Activated CD8-positive, alpha-beta memory T cell treated with anti-CD3 and anti-CD28 coated beads, Interleukin-2, amount 10 ng/mL, durations not matched to agents 7 days and 5 days (primary cell): ENCODE measurements at regions of chr2 and their contacts with region 1.

Region 1: GRCh38 chr2:73085691-73086360 is 14.3 kb upstream of the SFXN5 start:
- DNase-seq: peak; percentile 89
- ATAC-seq: peak; percentile 96
- H3K4me3 Mint-ChIP-seq: no peak overlapping the region
- H3K27ac Mint-ChIP-seq: no peak overlapping the region
- H3K4me1 Mint-ChIP-seq: no peaks in the 10 kb centered on the region
- H3K27me3 Mint-ChIP-seq: no peaks in the 10 kb centered on the region

Region 2: DNA sequence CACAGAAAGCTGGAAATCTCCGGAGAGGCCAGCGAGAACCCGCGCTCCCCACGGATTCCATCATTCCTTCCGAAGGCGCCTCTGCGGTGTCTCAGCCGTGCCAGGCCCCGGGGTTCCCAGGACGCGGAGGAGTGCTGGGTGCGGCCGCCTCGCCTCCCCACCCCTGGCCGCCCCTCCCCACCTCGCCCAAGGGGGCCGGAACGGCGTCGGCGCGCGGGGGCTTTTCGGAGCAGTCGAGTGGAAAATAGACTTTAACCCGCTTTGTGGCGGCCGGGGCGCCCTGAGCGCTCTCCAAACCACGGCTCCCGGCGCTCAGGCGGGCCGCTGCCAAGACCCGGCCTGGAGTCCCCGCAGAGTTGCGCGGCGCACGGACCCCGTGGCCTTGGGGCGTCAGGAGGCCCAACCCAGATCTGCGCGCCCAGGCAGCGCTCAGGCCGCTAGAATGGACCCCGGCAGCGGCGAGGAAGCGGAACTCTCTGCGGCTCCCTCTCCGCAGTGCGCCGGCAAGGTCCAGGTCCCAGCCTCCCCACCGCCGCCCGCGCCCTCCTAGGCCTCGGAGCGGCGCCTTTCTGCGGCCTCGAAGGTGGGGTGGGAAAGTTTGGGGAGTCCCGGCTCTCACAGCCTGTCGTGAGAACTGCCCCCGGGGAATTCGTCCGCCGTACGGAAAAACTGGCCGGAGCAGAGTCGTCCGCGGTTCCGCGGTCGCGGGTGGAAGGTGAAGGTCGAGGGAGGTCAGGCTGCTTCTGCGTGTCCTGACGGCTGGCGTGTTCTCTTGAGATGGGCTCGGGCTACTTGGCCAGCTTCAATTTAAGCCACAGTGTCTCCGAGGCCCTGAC is 169.7 kb before region 1 on chr2:
- CTCF ChIA-PET with region 1: no interaction called
- DNase-seq: peak; percentile 48
- ATAC-seq: peak; percentile 37
- H3K4me3 Mint-ChIP-seq: no peak overlapping the region
- H3K27ac Mint-ChIP-seq: no peak overlapping the region
- H3K4me1 Mint-ChIP-seq: peaks cover 22% of the 10 kb centered on the region
- H3K27me3 Mint-ChIP-seq: peaks cover 83% of the 10 kb centered on the region

Region 3: DNA sequence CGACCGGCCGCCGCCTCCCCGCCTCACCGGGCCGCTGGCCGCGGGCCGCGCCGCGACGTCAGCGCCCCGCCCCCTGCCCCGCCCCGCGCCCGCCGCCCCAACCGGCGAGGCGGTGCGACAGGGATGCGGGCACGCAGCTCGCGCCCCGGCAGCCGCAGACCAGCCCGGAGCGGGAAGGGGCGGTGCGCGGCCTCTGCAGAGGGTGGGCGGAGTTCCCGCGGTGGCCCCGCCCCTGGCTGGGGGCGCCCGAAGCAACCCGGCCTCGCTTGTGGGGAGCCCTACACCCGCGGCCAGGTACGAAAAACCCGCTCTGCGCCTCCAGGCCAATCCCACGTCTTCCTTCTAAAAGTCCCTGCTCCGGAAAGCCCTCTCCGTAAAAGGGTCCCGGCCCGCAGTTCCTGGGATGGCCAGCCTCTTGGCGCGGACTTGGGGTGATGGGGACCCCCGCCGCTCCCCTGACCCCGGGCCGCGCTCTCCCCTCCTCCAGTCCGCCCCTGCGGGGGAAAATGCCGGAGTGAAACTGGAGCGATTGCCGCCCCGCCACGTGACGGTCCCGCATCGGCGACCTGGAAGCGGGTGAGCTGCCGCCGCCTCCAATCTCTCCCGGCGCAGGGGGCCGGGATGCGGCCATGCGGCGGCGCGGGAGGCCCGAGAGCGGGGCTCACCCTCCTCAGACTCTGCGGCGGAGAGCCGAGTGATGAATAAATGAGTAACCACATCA is 27.2 kb after region 1 on chr2 and contains the start of gene RAB11FIP5:
- CTCF ChIA-PET with region 1: interaction called, 19 read pairs
- DNase-seq: peak; percentile 68
- ATAC-seq: peak; percentile 89
- H3K4me3 Mint-ChIP-seq: peak within 1 kb of the TSS; percentile 66
- H3K27ac Mint-ChIP-seq: no peak within 1 kb of the TSS
- H3K4me1 Mint-ChIP-seq: peaks cover 11% of the 10 kb centered on the region
- H3K27me3 Mint-ChIP-seq: peaks cover 37% of the 10 kb centered on the region
- total RNA-seq, gene RAB11FIP5: 1.1 to 2.9 TPM

Region 4: DNA sequence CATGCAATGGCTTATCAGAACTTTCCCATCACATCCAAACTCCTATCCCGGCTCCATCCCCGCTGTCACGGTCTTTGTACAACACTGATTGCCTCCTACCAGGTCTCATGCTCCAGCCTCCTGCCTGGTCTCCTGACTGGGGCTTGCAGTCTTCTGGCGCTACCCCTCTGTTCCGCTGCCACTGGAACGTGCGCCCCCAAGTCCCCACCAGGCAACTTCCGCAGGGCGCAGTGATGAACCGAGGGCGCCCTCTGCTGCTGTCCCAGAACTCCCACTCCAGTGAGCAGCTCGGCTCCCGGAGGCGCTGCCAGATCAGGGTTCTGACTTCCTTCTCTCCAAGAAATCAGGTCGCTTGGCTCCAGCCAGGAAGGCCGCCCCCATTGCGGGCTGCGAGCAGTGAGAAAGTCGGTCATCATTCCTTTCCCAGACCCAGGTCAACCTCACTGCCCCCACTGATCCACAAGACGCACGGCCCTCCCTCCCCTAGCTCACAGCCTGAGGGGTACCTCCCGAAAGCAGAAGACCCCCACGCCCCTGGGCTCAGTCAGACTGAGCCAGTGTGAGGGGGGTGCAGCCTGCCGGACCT is 70.8 kb after region 1 on chr2:
- CTCF ChIA-PET with region 1: interaction called, 41 read pairs
- DNase-seq: peak; percentile 62
- ATAC-seq: peak; percentile 66
- H3K4me3 Mint-ChIP-seq: no peak overlapping the region
- H3K27ac Mint-ChIP-seq: no peak overlapping the region
- H3K4me1 Mint-ChIP-seq: no peaks in the 10 kb centered on the region
- H3K27me3 Mint-ChIP-seq: peaks cover 53% of the 10 kb centered on the region

Region 5: GRCh38 chr2:73212448-73213176 is 126.8 kb after region 1 on chr2:
- CTCF ChIA-PET with region 1: interaction called, 21 read pairs
- DNase-seq: peak; percentile 83
- ATAC-seq: peak; percentile 76
- H3K4me3 Mint-ChIP-seq: peak overlapping the region; percentile 89
- H3K27ac Mint-ChIP-seq: no peak overlapping the region
- H3K4me1 Mint-ChIP-seq: peaks cover 30% of the 10 kb centered on the region
- H3K27me3 Mint-ChIP-seq: peaks cover 2% of the 10 kb centered on the region